ENCODE measurements at regions of chr5 and their contacts with region 1.

Region 1: DNA sequence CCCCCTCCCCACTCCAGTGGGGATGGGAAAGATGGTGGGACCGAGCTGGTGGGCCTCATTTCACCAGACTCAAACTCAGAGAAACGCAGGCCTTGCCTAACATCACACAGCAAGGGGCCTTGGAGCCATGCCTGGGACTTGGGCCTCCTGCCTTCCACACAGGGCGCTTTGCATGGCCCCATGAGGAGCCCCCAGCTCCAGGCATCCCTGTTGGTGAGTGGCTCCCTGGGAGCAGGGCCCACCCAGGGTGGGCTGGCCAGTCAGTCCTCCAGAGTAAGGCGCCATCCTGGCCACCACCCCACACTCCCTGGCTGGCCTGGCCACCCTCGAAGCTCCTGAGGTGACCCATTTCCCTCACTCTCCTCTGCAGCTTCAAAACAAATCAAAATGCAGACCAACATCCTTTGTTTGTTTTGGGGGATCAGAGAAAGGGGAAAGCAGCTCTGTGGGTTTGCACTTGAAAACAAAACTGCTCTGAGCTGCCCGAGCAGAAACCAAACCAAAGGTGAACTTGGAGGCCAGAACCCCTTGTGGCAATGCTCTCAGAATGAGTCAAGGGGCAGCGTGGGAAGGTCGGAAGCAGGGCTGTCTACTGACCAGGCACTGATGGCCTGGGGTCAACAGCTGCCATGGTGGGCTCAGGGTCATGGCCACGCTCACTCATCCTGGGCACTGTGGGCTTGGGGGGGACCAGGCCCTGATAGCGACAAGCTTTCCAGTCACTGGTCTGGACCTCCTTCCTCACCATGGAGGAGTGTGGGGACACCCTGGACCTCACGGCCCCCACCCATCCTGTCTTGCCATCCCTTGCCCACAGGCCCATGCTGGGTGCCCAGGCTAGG is 37.0 kb upstream of the VDAC1 start:
- DNase-seq: no peak
- H3K4me3 ChIP-seq: no peak overlapping the region
- H3K27ac ChIP-seq: no peak overlapping the region
- H3K4me1 ChIP-seq: peaks cover 3 to 8% (median 4%) of the 10 kb centered on the region in 4 experiments; a peak in 6 of 7 replicates
- H3K27me3 ChIP-seq: peaks cover 0 to 3% (median under 1%) of the 10 kb centered on the region in 4 experiments; a peak in 3 of 7 replicates
- CTCF ChIP-seq: no peak
- EP300 ChIP-seq: no peak
- POLR2A ChIP-seq: no peak
- RAD21 ChIP-seq: no peak

Region 2: DNA sequence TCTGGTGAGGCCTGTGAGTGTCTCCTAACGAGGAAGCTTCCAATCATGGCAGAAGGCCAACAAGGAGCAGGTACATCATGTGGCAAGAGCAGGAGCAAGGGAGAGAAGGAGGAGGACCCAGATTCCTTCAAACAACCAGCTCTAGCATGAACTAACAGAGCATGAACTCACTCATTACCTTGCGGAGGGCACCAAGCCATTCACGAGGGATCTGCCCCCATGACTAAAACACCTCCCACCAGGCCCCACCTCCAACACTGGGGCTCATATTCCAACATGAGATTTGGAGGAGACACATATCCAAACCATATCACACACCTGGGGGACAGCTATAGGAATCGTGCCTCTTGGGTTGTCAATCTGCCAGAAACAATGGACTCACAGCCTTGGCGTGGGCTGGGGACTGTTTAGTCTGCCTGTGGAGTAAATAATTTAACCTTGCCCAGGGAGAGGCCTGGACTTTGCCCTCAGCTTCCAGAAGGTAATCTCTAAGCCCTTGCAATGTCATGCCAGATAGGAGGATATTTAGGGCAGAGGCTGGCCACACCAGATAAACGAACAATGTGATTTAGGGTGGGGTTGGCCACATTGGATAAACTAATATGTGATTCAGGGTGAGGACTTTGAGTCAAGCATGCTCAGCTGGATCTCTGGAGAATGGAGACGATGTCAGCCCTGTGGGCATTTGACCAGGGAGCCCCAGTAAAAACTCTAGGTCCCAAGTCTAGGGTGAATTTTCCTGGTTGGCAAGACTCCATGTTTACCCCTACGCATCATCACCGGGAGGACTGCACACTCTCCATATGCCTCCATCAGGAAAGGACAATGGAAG is 23.4 kb before region 1 on chr5:
- CTCF ChIA-PET with region 1: interaction called, 23 read pairs
- POLR2A ChIA-PET with region 1: no interaction called
- DNase-seq: no peak
- H3K4me3 ChIP-seq: no peak overlapping the region
- H3K27ac ChIP-seq: no peak overlapping the region
- H3K4me1 ChIP-seq: peaks cover 0 to 5% (median 2%) of the 10 kb centered on the region in 4 experiments; a peak in 3 of 7 replicates
- H3K27me3 ChIP-seq: no peaks in the 10 kb centered on the region
- CTCF ChIP-seq: no peak
- EP300 ChIP-seq: no peak
- POLR2A ChIP-seq: no peak
- RAD21 ChIP-seq: no peak

Region 3: GRCh38 chr5:134053840-134054338 is 12.1 kb after region 1 on chr5:
- CTCF ChIA-PET with region 1: interaction called, 68 read pairs
- POLR2A ChIA-PET with region 1: interaction called, 3 read pairs
- DNase-seq: no peak
- H3K4me3 ChIP-seq: no peak overlapping the region
- H3K27ac ChIP-seq: no peak overlapping the region
- H3K4me1 ChIP-seq: peaks cover 4 to 24% (median 15%) of the 10 kb centered on the region in 4 experiments
- H3K27me3 ChIP-seq: no peaks in the 10 kb centered on the region; a peak in 1 of 7 replicates
- CTCF ChIP-seq: no peak
- EP300 ChIP-seq: no peak
- POLR2A ChIP-seq: no peak
- RAD21 ChIP-seq: no peak

Region 4: GRCh38 chr5:134070725-134071613 is 29.2 kb after region 1 on chr5:
- CTCF ChIA-PET with region 1: interaction called, 34 read pairs
- POLR2A ChIA-PET with region 1: interaction called, 3 read pairs
- DNase-seq: peak in 1 of 2 experiments; percentile 75
- H3K4me3 ChIP-seq: peak overlapping the region; percentile 14 to 57 (median 46)
- H3K27ac ChIP-seq: no peak overlapping the region
- H3K4me1 ChIP-seq: peaks cover 0 to 7% (median 2%) of the 10 kb centered on the region in 4 experiments; a peak in 4 of 7 replicates
- H3K27me3 ChIP-seq: peaks cover 0 to 8% (median 3%) of the 10 kb centered on the region in 4 experiments; a peak in 4 of 7 replicates
- CTCF ChIP-seq: peak; percentile 24 to 47 (median 30); a peak in 3 of 4 replicates
- EP300 ChIP-seq: no peak
- POLR2A ChIP-seq: no peak
- RAD21 ChIP-seq: peak; percentile 40 to 49

Region 5: DNA sequence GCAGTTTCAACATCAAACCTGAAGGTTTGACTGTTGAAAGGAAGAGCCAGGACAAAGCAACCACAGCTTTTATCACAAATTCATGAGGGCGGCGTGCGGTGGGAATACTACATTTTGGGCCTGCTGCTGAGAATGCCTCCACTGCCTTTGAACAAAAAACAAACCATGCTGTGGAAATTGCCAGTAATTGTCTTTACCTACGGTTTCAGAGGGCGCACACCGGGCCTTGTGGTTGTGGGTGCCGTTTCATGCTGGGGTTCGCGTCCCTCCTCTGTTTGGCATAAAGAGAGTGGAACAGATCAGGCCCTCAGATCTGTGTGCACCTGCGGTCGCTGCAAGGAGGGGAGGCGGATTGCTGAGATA is 45.1 kb after region 1 on chr5:
- CTCF ChIA-PET with region 1: interaction called, 30 read pairs
- POLR2A ChIA-PET with region 1: no interaction called
- DNase-seq: no peak
- H3K4me3 ChIP-seq: no peak overlapping the region
- H3K27ac ChIP-seq: no peak overlapping the region
- H3K4me1 ChIP-seq: peaks cover 0 to 6% (median 1%) of the 10 kb centered on the region in 4 experiments; a peak in 4 of 7 replicates
- H3K27me3 ChIP-seq: peaks cover 0 to 2% (median 0%) of the 10 kb centered on the region in 4 experiments; a peak in 1 of 7 replicates
- CTCF ChIP-seq: no peak
- EP300 ChIP-seq: no peak
- POLR2A ChIP-seq: no peak
- RAD21 ChIP-seq: no peak

Region 6: DNA sequence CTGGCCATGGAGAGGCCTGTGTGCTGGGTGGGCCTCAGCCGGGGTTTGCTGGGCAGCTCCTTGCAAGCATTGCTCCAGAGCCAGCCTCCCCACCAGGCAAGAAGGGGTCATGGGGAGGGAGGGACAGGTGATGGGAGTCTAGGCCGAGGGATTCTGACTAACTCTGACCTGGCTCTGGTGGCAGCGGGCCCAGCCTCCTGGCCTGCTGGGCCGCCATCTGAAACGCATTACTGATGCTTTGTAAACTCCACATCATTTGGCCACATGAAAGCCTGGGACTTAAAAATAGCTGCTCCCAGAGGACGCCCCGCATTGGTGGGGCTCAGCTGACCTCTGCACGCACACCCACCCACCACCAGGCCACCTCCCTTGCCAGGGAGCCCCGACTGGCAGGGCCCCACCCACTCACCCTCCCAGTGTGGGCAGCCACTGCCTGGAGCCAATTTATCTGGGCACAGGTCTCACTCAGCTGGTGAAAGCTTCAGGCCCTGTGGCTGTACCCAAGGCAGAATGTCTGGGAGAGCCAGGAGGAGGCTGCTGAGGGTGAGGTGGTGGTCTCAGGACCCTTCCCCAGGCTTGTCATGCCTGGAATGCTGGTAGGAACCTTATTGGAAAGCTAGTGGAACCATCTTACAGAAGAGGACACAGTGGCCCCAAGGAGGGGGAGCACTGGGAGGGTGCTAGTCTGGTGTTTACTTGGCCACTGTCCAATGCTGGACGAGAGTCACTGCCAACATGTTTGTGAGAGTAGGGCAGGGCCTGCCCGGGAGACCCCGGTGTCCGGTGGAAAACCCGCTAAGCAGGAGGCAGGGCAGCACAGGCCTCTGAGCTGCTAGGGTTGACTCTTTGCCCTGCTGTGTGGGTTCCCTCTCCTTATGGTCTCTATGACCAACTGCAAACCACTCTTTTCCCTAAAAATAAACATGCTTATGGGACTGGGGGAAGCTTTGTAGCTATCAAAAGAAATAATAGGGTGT is 83.5 kb after region 1 on chr5:
- CTCF ChIA-PET with region 1: interaction called, 148 read pairs
- POLR2A ChIA-PET with region 1: no interaction called
- DNase-seq: no peak
- H3K4me3 ChIP-seq: no peak overlapping the region
- H3K27ac ChIP-seq: no peak overlapping the region
- H3K4me1 ChIP-seq: no peaks in the 10 kb centered on the region; a peak in 1 of 7 replicates
- H3K27me3 ChIP-seq: no peaks in the 10 kb centered on the region
- CTCF ChIP-seq: no peak
- EP300 ChIP-seq: no peak
- POLR2A ChIP-seq: no peak
- RAD21 ChIP-seq: no peak

Measured in H1 (cell line).